Activated CD8-positive, alpha-beta T cell treated with anti-CD3 and anti-CD28 coated beads, Interleukin-2, amount 10 ng/mL, durations not matched to agents 7 days and 5 days (primary cell): ENCODE measurements at regions of chr6 and their contacts with region 1.

Region 1: DNA sequence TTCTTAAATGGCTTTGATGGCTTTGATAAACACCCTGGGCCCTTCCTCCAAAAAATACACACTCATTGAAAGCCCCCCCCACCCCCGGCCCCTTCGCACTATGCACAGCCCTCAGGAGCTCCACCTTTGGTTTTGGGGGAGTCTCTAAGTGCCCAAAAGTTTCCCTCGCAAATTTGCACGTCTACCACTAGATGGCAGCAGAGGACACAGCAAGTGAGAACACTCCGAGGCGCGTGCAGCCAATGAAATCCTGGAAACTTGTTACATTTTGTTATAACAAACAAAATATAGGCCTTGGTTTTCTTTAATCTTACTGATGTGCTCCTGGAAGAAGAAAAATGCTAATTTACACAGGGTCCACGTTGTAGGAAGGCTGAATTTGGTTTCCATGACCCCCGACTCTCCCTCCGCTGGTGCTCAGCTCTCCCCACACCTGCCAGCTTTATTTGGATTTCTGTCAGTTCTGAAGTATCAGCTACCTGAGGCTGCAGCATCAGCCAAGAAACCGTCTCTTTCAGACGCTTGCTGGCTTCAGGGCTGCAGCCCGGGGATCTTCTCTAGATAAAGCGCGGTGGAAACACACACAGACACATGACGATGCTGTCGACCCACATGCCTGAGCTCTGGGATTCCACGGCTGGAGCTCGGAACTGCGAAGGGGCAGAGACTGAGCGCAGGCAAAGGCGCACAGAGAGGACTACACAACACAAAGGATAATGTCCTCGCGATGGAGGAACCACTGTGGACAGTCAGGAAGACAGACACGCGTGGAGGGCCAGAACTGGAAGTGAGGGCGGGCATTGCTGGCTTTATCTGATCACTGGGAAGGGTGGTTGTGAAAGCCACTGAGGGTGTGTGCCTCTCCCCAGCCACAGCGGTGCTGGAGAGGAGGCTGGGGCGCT is 148.4 kb upstream of the RPS6KA2 start:
- DNase-seq: peak; percentile 77
- ATAC-seq: peak; percentile 77
- H3K4me3 Mint-ChIP-seq: no peak overlapping the region
- H3K27ac Mint-ChIP-seq: no peak overlapping the region
- H3K4me1 Mint-ChIP-seq: peaks cover 15% of the 10 kb centered on the region
- H3K27me3 Mint-ChIP-seq: peaks cover 8% of the 10 kb centered on the region

Region 2: DNA sequence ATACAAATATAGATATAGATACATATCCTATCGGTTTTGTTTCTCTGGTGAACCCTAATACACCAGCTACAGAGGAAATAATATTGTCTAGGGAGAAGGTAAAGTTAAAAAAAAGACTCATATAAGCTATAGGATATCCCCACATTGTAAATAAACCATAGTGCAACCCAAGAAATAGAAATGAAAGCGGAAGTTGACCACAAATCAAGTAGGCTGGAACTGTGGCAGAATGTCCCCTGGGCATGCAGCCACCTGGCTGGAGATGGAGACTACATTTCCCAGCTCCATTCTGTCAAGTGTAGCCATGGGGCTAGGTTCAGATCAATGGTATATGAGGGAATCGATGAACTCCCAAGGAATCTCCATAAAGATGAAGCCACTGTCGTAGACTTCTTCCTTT is 78.3 kb before region 1 on chr6:
- CTCF ChIA-PET with region 1: no interaction called
- POLR2A ChIA-PET with region 1: no interaction called
- DNase-seq: no peak
- ATAC-seq: no peak
- H3K4me3 Mint-ChIP-seq: no peak overlapping the region
- H3K27ac Mint-ChIP-seq: no peak overlapping the region
- H3K4me1 Mint-ChIP-seq: no peaks in the 10 kb centered on the region
- H3K27me3 Mint-ChIP-seq: peaks cover 10% of the 10 kb centered on the region

Region 3: GRCh38 chr6:166757232-166758135 is 17.9 kb before region 1 on chr6:
- CTCF ChIA-PET with region 1: interaction called, 15 read pairs
- POLR2A ChIA-PET with region 1: no interaction called
- DNase-seq: no peak
- ATAC-seq: peak; percentile 34
- H3K4me3 Mint-ChIP-seq: no peak overlapping the region
- H3K27ac Mint-ChIP-seq: no peak overlapping the region
- H3K4me1 Mint-ChIP-seq: peaks cover 33% of the 10 kb centered on the region
- H3K27me3 Mint-ChIP-seq: peaks cover 32% of the 10 kb centered on the region

Region 4: DNA sequence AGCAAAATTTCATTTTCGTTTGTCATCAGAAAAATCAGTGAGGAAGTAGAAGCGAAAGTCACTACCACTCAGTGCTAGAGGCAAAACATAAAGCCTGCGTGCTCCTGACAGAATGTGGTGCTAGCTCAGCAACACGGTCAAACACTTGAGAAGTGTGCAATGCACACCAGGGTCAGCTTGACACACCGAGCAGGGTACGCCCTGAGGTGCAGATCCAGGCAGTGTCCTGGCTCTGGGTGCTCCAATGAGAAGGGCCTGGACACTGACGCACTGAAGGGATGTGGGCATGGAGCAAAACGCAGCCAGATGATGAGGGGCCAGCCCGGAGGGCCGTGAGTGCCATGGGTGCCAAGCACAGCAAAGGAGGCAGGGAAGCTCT is 175.0 kb after region 1 on chr6:
- CTCF ChIA-PET with region 1: interaction called, 17 read pairs
- POLR2A ChIA-PET with region 1: no interaction called
- DNase-seq: no peak
- ATAC-seq: no peak
- H3K4me3 Mint-ChIP-seq: peak overlapping the region; percentile 19
- H3K27ac Mint-ChIP-seq: peak overlapping the region; percentile 89
- H3K4me1 Mint-ChIP-seq: peaks cover 53% of the 10 kb centered on the region
- H3K27me3 Mint-ChIP-seq: no peaks in the 10 kb centered on the region

Region 5: GRCh38 chr6:166989427-166990032 is 214.1 kb after region 1 on chr6:
- CTCF ChIA-PET with region 1: interaction called, 29 read pairs
- POLR2A ChIA-PET with region 1: no interaction called
- DNase-seq: peak; percentile 43
- ATAC-seq: peak; percentile 74
- H3K4me3 Mint-ChIP-seq: no peak overlapping the region
- H3K27ac Mint-ChIP-seq: no peak overlapping the region
- H3K4me1 Mint-ChIP-seq: peaks cover 22% of the 10 kb centered on the region
- H3K27me3 Mint-ChIP-seq: no peaks in the 10 kb centered on the region

Region 6: GRCh38 chr6:167141667-167142432 is 366.4 kb after region 1 on chr6:
- CTCF ChIA-PET with region 1: interaction called, 20 read pairs
- POLR2A ChIA-PET with region 1: no interaction called
- DNase-seq: peak; percentile 54
- ATAC-seq: peak; percentile 90
- H3K4me3 Mint-ChIP-seq: no peak overlapping the region
- H3K27ac Mint-ChIP-seq: no peak overlapping the region
- H3K4me1 Mint-ChIP-seq: peaks cover 16% of the 10 kb centered on the region
- H3K27me3 Mint-ChIP-seq: peaks cover 9% of the 10 kb centered on the region